Heart right ventricle (tissue), 16 donors: ENCODE measurements at regions of chr2 and their contacts with region 1.

Region 1: GRCh38 chr2:171160119-171160955 is at the start of gene TLK1:
- DNase-seq: peak; percentile 68
- ATAC-seq: peak; percentile 50 to 84 (median 74)
- H3K4me3 ChIP-seq: peak within 1 kb of the TSS; percentile 63 to 88 (median 80)
- H3K27ac ChIP-seq: peak within 1 kb of the TSS; percentile 90 to 96 (median 93)
- H3K4me1 ChIP-seq: peaks cover 0 to 50% (median 14%) of the 10 kb centered on the region in 9 donors
- H3K27me3 ChIP-seq: no peaks in the 10 kb centered on the region
- CTCF ChIP-seq: no peak
- total RNA-seq, gene TLK1: 27.6 to 41.8 (median 31.8) TPM

Region 2: DNA sequence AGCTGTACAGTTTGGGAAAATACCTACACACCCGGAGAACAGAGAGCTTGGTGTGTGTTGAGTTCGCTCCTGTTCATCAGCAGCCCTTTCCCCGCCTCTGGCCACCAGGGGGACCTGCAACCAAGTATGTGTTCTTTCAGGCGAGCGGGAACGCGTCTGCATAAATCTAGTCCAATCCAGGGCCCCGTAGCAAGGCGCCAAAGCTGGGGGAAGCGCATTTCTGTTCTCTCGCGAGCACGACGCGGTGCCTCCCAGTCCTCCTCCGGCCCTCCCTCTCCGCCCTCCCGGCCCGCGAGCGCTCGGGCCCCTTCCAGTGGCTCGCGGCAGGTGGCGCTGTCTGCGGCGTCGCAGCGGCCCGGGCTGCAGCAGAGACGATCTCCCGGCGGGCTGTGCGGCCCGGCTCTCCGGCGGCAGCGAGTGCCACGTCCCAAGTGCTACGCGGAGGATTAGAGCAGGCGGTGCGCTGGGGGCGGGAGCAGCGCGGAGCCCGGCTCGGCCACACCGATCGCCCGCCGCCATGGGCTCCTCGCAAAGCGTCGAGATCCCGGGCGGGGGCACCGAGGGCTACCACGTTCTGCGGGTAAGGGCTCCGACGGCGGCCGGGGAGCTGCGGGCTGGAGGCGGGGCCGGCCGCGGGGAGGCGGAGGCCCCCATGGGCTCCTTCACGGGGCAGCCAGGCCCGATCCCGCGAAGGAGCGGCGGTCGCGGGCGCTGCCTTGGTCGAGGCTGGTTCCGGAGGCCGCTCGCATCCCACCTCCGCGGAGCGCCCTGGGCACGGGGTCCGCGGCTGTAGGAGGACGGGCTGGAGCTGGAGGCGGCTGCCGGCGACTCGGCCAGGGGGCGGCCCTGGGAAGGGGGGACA is 231.3 kb before region 1 on chr2 and contains the start of gene GORASP2:
- intact Hi-C with region 1: loop called in 1 of 10 experiments (anchors 5 kb)
- DNase-seq: peak; percentile 97 to 99
- ATAC-seq: peak; percentile 97 to 99 (median 98)
- H3K4me3 ChIP-seq: peak within 1 kb of the TSS; percentile 73 to 98 (median 88)
- H3K27ac ChIP-seq: peak within 1 kb of the TSS; percentile 82 to 98 (median 94)
- H3K4me1 ChIP-seq: peaks cover 3 to 47% (median 38%) of the 10 kb centered on the region in 9 donors
- H3K27me3 ChIP-seq: no peaks in the 10 kb centered on the region
- CTCF ChIP-seq: peak; percentile 93 to 98 (median 97)
- total RNA-seq, gene GORASP2: 54.2 to 74.1 (median 62.1) TPM

Region 3: DNA sequence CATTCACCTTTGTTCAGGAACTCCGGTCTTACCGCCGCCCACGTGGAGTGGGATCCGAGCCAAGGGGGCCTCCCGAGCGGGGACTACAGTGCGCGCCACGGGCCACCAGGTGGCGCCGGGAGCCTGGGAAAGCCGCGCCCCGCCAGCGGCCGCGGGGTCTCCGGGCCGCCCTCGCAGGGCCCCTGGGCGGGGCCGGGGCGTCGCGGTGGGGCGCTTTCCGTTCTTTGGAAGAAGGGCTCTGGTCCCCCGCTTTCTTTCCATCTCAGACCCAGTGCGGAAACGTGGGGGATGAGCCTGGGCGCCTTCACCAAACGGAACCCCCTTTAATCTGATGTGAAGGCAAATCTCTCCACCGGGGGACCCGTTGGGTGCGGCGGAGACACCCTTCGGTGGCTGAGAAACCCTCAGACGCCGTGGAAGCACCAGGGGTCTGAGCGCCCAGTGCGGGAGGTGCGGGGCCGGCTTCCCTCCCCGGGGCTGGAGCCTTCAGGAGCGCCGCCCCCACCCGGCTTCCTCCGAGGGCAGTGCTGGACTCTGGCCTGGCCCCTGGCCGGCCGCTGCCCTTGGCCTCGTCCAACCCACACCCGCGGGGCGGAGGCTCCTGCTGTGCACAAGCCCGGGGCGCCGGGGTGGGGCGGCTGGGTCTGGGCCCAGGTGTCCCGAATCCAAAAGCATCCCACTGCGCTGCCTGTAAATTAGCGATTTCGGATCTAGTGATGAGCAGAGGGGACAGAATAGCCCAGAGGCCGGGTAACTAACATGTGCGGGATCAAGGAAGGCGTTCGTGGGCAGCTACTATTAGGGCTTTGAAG is 186.6 kb before region 1 on chr2:
- intact Hi-C with region 1: loop called in 9 of 10 experiments (anchors 2 to 10 kb)
- DNase-seq: peak; percentile 84 to 85
- ATAC-seq: peak; percentile 95 to 98 (median 97)
- H3K4me3 ChIP-seq: peak overlapping the region; percentile 65 to 93 (median 72)
- H3K27ac ChIP-seq: peak overlapping the region; percentile 47 to 92 (median 82)
- H3K4me1 ChIP-seq: peaks cover 0 to 14% (median 10%) of the 10 kb centered on the region in 9 donors
- H3K27me3 ChIP-seq: no peaks in the 10 kb centered on the region
- CTCF ChIP-seq: peak; percentile 82 to 99 (median 94)

Region 4: DNA sequence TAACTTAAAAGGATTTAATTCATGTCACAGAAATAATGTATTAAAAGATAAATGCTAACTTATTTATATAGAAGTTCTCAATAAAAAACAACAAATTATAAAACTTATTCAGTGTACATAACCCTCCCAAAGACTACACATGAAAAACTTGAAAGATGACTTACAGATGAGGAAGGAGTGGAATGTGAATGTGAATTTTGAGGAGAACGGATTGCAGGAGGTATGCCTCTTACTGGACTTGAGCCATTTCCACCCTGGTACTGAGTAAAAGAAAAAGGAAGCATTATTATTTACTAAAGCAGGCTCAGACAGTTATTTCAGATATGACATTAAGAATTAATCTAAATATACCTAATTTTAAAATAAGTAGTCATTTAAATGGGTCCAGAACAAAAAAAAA is 104.0 kb before region 1 on chr2:
- intact Hi-C with region 1: loop called in 1 of 10 experiments (anchors 5 kb)
- DNase-seq: no peak
- ATAC-seq: no peak
- H3K4me3 ChIP-seq: no peak overlapping the region
- H3K27ac ChIP-seq: no peak overlapping the region
- H3K4me1 ChIP-seq: no peaks in the 10 kb centered on the region
- H3K27me3 ChIP-seq: no peaks in the 10 kb centered on the region
- CTCF ChIP-seq: no peak

Region 5: DNA sequence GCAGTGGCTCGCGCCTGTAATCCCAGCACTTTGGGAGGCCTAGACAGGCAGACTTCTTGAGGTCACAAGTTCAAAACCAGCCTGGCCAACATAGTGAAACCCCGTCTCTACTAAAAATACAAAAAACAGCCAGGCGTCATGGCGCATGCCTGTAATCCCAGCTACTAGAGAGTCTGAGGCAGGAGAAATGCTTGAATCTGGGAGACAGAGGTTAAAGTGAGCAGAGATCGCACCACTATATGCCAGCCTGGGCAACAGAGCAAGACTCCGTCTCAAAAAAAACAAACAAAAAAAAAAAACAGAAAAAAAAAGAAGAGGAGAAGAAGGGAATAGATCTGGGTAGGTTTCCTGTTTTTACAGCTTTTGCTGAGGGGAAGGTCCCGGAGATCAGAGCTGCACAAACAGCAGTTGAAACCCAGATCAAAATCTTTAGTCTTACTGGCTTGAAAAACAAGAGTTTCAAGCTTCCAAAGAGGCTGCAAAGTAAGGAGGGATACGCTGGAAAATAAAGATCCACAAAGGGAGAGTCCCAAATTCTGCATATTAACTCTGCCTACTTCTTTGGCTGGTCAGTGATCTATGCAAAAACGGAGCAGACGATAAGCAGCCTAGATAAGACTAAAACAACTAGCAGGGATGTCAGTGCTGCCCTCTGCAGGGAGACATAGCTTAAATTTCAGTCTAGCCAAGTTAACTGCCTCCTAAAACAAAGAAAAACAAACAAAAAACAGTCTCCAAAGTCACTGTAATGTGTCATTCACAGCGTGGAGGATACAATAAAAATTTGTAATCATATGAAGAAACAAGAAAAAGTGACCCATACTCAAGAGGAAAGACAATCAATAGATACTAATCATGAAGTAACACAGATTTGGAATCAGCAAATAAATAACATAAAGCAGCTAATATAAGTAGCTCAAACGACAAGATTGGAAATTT is 73.7 kb before region 1 on chr2:
- intact Hi-C with region 1: loop called in 1 of 10 experiments (anchors 10 kb)
- DNase-seq: peak in 1 of 2 donors; percentile 21
- ATAC-seq: peak in 5 of 8 donors; percentile 44 to 75 (median 58)
- H3K4me3 ChIP-seq: peak overlapping the region in 2 of 10 donors; percentile 6 to 17
- H3K27ac ChIP-seq: no peak overlapping the region
- H3K4me1 ChIP-seq: peaks cover 0 to 26% (median 12%) of the 10 kb centered on the region in 9 donors
- H3K27me3 ChIP-seq: no peaks in the 10 kb centered on the region
- CTCF ChIP-seq: peak; percentile 7 to 73 (median 54)

Region 6: GRCh38 chr2:171416009-171416926 is 255.9 kb after region 1 on chr2:
- intact Hi-C with region 1: loop called in 7 of 10 experiments (anchors 1 to 10 kb)
- DNase-seq: peak; percentile 65 to 86
- ATAC-seq: peak; percentile 92 to 99 (median 96)
- H3K4me3 ChIP-seq: no peak overlapping the region
- H3K27ac ChIP-seq: peak overlapping the region in 2 of 10 donors; percentile 19 to 32
- H3K4me1 ChIP-seq: peaks cover 0 to 18% (median 0%) of the 10 kb centered on the region in 9 donors
- H3K27me3 ChIP-seq: no peaks in the 10 kb centered on the region
- CTCF ChIP-seq: peak; percentile 64 to 92 (median 87)

Region 7: DNA sequence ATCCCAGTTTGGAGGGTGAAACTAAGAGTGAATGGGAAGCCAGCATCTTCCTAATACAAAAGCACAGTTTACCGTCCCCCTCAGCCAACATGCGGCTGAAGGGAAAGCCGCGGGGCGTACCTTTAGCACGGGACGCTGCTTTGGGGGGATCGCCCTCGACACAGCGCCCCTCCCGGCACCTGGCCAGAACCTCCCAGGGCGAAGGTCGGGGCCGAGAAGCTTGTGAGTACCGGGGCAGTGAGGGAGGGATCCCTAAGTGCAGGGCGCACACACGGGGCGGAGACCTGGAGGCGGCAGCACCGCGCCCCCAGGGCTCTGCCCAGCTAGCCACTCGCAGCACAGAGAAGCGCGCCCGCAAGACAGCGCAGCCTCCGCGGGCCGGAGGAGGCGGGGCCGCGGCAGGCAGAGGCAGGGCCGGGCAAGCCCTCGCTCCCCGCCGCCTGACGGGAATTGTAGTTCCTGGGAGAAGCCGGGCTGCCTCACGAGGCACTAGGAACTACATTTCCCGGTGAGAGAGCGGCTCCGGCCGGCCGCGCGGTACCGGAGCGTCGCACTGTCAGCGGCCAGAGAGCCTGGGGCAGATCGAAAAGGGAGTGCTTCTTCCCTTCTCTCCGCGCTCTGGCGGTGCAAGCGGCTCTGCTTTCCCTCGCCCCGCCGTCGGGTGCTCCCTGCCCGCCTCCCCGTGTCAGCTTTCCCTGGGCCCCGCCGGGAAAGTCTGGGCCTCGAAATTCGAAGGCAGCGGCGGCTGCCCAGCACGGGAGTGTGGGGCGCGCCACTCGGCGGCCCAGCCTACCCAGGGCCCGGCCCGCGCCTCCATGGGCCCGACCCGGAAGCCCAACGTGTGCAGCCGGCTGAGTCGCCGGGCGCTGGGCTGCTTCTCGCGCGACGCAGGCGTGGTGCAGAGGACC is 273.7 kb after region 1 on chr2 and contains the starts of genes DCAF17 and METTL8:
- intact Hi-C with region 1: loop called in 3 of 10 experiments (anchors 5 to 10 kb)
- DNase-seq: peak; percentile 94 to 96
- ATAC-seq: peak; percentile 98 to 99 (median 99)
- H3K4me3 ChIP-seq: peak within 1 kb of the TSS; percentile 45 to 95 (median 82)
- H3K27ac ChIP-seq: peak within 1 kb of the TSS; percentile 71 to 98 (median 96)
- H3K4me1 ChIP-seq: peaks cover 0 to 21% (median 17%) of the 10 kb centered on the region in 9 donors
- H3K27me3 ChIP-seq: no peaks in the 10 kb centered on the region
- CTCF ChIP-seq: peak in 8 of 9 donors; percentile 19 to 62 (median 42)
- total RNA-seq, gene DCAF17: 6.3 to 10.5 (median 7.8) TPM
- total RNA-seq, gene METTL8: 6.6 to 13.6 (median 11.7) TPM